ENCODE measurements at regions of chr15 and their contacts with region 1.

Region 1: DNA sequence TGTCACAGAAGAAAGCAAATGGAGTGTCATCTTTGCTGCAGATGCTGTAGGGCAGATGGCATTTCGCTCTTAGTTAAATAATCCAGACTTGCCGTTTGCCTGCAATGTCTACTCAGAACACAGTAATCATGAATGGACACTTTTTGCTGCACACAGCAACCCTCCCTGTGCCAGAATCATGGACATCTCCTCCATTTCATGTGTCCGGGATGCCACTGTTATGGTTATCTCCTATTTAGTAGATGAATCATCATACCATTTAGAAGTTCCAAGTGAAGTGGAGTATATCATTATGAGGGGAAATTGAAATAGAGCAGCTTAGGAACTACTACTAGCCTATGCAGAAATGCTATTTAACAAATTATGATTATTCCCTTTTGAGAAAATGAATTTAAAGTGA is 118.5 kb downstream of the DUT start:
- DNase-seq: no peak
- ATAC-seq: no peak
- H3K4me3 ChIP-seq: no peak overlapping the region
- H3K27ac ChIP-seq: no peak overlapping the region
- H3K4me1 ChIP-seq: peaks cover 0 to 19% (median 8%) of the 10 kb centered on the region in 12 donors
- H3K27me3 ChIP-seq: no peaks in the 10 kb centered on the region
- CTCF ChIP-seq: no peak
- POLR2A ChIP-seq: no peak

Region 2: DNA sequence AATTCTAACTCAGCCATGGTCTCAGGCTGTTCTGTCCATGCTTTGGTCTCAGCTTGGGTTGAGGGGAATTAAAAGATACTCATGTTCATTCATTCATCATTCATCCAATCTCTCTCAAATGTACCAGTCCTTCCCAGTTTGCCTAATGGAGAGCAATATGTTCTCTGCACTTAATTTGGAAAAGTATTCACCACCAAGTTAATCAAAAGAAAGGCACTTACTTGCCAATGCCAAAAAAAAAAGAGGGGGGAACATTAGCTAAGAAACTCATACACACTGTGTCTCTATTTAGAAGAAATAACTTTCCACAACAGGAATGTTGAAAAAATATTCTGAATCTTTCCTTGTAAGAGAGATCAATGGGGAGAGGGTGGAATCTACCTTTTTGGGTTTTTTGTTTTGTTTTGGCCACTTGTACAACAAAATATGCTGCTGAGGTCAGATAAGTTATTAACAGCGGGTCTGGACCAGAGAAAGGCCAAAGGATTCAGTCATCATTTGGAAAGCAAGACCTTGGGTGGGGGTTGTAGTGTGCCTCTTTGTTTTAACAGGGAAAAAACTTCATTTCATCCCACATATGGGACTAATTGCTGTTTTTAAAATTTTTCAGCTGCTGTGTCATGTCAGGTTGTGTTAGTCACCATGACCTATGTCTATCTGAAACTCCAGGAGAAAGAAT is 43.5 kb after region 1 on chr15:
- intact Hi-C with region 1: loop called in 1 of 10 experiments (anchors 5 kb)
- DNase-seq: peak in 1 of 5 donors; percentile 24
- ATAC-seq: peak; percentile 74 to 89 (median 84)
- H3K4me3 ChIP-seq: no peak overlapping the region
- H3K27ac ChIP-seq: peak overlapping the region in 10 of 12 donors; percentile 2 to 61 (median 21)
- H3K4me1 ChIP-seq: peaks cover 0 to 7% (median 0%) of the 10 kb centered on the region in 12 donors
- H3K27me3 ChIP-seq: no peaks in the 10 kb centered on the region
- CTCF ChIP-seq: no peak
- POLR2A ChIP-seq: no peak